Dendritic cell treated with granulocyte-macrophage colony-stimulating factor and Interleukin-4, amounts not matched to agents 40 ng/mL and 50 ng/mL, for 4 days (primary cell): ENCODE measurements at regions of chr3 and their contacts with region 1.

Region 1: DNA sequence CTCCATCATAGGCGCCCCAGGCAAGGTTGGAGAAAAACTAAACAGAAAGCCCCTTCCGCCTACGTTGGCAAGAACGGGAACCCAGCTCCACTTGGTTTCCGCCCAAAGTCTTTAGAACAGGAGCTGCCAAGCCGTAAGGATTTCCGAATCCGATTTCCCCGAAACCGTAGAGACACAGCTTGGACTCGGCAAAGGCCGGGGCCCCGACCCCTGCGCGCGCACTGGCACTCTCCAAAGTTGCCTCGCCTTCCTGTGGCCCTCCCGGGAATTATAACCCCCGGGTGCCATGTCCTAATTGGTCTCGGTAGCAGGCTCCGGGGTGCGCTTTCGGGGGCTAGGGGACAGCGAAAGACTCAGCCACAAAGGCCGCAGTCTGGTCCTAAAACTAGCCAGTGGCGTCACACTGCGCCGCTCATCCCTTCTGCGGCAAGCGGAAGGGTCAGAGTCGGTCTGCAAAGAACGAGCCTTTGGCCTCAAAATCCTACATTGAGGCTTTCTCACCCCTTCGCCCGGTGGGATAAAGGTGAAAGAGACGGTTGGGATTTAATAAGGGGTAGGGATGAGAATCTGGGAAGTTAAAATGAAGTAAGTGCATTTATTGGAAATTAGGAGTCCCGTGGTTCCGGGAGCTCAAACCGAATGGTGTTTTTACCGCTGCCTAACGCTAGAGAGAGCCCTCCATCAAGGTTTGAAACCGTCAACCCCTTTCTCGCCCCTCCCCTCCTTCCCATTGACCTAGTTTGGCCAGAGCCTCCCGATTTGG is 6.8 kb downstream of the BCL6 start:
- H3K4me3 Mint-ChIP-seq: peak overlapping the region; percentile 87
- H3K27ac Mint-ChIP-seq: peak overlapping the region; percentile 100
- H3K4me1 Mint-ChIP-seq: peaks cover 72% of the 10 kb centered on the region
- H3K27me3 Mint-ChIP-seq: no peaks in the 10 kb centered on the region

Region 2: DNA sequence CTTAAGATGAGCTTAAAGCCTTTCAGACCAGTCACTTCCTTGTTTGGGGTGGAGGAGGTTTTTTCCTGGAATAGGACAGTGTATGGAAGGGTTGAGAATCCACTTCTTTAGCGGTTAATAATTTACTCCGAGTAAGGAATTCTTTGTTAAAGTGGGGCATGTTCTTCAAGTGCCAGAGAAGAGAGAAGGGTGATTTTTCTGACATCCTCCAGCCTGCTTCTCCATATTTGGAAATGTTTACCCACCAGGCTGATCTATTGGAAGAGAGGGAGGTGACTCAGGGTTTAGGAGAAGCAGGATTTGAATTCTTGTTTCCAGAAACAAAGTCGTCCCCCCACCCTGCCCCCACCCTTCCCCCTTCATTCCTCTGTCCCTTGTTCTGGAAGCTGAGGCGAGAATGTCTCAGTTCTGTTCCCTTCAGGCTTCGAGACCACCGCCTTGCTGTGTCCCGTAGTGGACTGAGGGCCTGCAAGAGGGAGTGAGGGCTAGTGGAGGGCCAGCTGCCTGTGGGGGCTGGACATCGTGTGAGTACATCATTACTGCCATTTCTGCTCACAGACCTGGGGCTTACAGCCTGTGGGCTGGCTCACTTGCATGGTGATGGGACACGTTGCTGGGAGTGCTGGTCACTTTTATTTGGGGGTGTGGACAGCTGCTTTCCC is 473.9 kb after region 1 on chr3:
- intact Hi-C with region 1: loop called (anchors 5 kb)
- H3K4me3 Mint-ChIP-seq: no peak overlapping the region
- H3K27ac Mint-ChIP-seq: peak overlapping the region; percentile 82
- H3K4me1 Mint-ChIP-seq: peaks cover 64% of the 10 kb centered on the region
- H3K27me3 Mint-ChIP-seq: no peaks in the 10 kb centered on the region

Region 3: DNA sequence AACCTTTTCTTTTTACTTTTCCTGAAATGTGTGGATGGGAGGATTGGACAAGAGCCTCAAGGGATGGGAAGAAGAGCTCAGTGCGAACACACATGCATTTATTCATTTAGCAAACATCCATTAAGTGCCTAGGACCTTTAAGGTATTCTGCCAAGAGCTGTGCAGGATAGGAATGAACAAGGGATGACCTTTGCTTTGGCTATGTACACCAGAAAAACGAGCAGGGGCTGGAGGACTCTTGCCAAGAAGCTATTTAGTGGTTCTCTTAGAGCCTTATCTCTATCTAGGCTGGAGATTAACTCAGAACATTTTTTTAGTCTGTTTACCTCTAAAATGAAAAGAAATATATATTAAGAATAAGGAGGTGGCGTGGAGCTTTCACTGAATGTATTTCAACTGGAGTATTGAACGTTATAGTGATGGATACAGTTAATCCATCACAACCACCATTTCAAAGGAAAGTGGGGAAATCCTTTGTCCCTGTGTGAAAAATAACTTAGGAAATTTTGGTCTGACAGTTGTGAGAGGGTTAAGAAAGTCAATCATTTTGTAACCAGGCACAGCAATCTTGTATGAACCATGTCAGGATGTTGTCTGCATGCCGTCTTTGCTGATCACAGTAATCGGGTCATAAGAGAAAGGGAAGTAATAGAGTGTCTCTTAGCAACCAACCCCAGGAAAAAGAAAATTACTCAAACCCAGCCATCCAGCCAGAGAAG is 694.4 kb after region 1 on chr3:
- intact Hi-C with region 1: loop called (anchors 5 kb)
- H3K4me3 Mint-ChIP-seq: peak overlapping the region; percentile 65
- H3K27ac Mint-ChIP-seq: peak overlapping the region; percentile 93
- H3K4me1 Mint-ChIP-seq: peaks cover 45% of the 10 kb centered on the region
- H3K27me3 Mint-ChIP-seq: no peaks in the 10 kb centered on the region

Region 4: DNA sequence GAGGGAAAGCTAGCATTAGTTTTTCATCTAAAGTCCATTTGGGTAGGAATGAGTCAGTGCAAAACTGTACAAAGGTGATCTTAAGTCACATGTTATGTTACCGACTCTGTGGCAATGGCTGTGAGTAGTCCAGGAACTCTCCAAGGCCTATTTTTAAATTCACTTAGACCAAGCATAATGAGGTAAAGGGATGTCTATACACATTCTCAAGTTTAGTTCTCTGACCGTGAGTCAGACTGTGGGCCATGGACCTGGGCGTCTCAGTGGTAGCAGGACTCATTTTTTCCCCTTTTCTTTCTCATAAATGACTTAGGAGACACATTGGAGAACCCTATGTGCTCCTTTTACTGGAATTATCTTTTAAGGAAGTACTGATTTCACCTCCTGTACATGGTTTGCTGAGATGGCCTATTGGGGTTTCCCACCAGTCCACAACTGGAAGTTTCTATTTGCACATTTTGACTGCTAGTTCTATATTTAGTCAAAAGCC is 944.6 kb after region 1 on chr3:
- intact Hi-C with region 1: loop called (anchors 5 kb)
- H3K4me3 Mint-ChIP-seq: no peak overlapping the region
- H3K27ac Mint-ChIP-seq: peak overlapping the region; percentile 76
- H3K4me1 Mint-ChIP-seq: peaks cover 59% of the 10 kb centered on the region
- H3K27me3 Mint-ChIP-seq: no peaks in the 10 kb centered on the region

Region 5: DNA sequence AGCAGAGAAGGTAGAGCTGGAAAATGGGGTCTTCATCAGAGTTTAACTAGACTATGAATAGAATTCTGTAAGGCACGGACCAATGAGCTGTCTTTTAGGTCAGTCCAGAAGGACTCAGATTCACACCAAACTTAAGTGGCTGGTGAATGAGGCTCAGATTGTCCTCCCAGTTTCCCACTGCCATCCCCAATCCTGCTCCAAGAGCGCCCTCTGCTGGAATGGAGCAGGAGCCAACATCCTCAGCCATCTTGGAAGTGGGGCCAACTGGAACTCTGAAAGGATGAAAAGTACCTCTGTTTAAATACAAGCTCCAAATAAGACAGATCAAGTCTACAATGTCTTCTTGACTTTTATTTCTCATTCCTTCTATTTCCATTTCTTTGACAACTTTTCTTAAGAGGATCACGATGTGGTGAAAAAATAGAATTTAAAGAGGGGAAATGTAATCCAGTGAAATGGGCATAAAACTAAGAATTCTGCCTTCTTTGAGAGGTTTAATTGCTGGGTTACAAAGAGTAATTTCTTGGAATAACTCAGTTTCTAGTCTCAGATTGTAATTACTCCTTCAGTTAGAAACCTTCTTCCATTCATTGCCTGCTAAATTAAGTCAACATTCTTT is 1216.2 kb after region 1 on chr3:
- intact Hi-C with region 1: loop called (anchors 1 kb)
- H3K4me3 Mint-ChIP-seq: no peak overlapping the region
- H3K27ac Mint-ChIP-seq: no peak overlapping the region
- H3K4me1 Mint-ChIP-seq: peaks cover 38% of the 10 kb centered on the region
- H3K27me3 Mint-ChIP-seq: no peaks in the 10 kb centered on the region